Breast epithelium (tissue), 4 donors: ENCODE measurements at regions of chr4 and their contacts with region 1.

Region 1: GRCh38 chr4:67204441-67204840 is 340.9 kb downstream of the CENPC start:
- DNase-seq: no peak
- H3K4me3 ChIP-seq: no peak overlapping the region
- H3K27ac ChIP-seq: no peak overlapping the region
- H3K4me1 ChIP-seq: no peaks in the 10 kb centered on the region
- H3K27me3 ChIP-seq: no peaks in the 10 kb centered on the region
- CTCF ChIP-seq: no peak
- POLR2A ChIP-seq: no peak

Region 2: DNA sequence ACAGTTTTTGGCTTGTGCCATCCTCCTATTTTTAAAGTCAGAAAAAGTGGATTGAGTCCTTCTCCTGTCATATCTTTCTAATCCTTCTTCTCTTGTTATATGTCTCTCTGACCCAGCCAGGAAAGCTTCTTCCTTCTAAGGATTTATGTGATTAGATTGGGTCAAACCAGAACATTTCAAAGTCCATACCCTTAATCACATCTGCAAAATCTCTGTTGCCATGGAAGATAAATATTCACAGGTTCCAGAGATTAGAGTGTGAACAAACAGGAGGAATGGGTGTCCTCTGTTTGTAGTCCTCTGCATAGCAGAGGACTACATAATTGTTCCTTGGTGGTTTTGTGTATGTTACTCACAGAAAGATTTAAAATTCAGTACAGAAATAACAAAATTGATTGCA is 1955.3 kb before region 1 on chr4:
- intact Hi-C with region 1: loop called (anchors 5 kb)
- DNase-seq: no peak
- H3K4me3 ChIP-seq: no peak overlapping the region
- H3K27ac ChIP-seq: no peak overlapping the region
- H3K4me1 ChIP-seq: no peaks in the 10 kb centered on the region
- H3K27me3 ChIP-seq: no peaks in the 10 kb centered on the region
- CTCF ChIP-seq: no peak
- POLR2A ChIP-seq: no peak

Region 3: GRCh38 chr4:65546882-65547416 is 1657.5 kb before region 1 on chr4:
- intact Hi-C with region 1: no loop called
- DNase-seq: no peak
- H3K4me3 ChIP-seq: no peak overlapping the region
- H3K27ac ChIP-seq: no peak overlapping the region
- H3K4me1 ChIP-seq: no peaks in the 10 kb centered on the region
- H3K27me3 ChIP-seq: no peaks in the 10 kb centered on the region
- CTCF ChIP-seq: no peak
- POLR2A ChIP-seq: no peak

Region 4: DNA sequence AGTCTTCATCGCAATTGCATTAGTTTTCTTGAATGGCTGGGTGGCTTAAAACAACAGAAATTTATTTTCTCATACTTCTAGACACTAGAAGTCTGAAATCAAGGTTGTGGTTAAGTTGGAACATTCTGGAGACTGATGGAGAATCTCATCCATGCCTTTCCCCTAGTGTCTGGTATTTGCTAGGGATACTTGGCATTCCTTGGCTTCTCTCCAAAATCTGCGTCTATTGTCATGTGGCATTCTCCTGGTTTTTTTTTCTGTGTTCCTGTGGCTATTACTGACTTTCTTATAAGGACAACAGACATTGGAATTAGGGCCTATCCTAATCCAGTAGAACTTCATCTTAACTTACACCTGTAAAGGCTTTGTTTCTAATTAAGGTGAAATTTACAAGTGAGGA is 1261.4 kb before region 1 on chr4:
- intact Hi-C with region 1: no loop called
- DNase-seq: no peak
- H3K4me3 ChIP-seq: no peak overlapping the region
- H3K27ac ChIP-seq: no peak overlapping the region
- H3K4me1 ChIP-seq: no peaks in the 10 kb centered on the region
- H3K27me3 ChIP-seq: no peaks in the 10 kb centered on the region
- CTCF ChIP-seq: no peak
- POLR2A ChIP-seq: no peak

Region 5: DNA sequence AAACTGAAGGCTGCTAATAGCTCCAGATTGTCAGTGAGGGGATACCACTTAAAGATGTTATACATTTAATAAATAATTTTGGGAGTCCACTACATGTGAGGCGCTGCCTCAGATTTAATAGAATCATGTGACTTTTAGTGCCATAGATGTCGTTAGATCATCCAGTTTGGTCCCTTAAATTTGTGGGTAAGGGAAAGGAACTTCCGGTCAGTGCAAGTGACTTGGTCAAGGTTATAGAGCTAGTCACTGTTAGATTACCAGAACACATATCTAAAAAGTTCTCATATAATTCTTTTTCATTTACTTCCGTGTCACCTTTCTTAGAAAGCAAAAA is 497.0 kb after region 1 on chr4:
- intact Hi-C with region 1: no loop called
- DNase-seq: no peak
- H3K4me3 ChIP-seq: peak overlapping the region; percentile 80 to 96 (median 94)
- H3K27ac ChIP-seq: peak overlapping the region; percentile 98
- H3K4me1 ChIP-seq: peaks cover 0 to 6% of the 10 kb centered on the region in 2 donors
- H3K27me3 ChIP-seq: no peaks in the 10 kb centered on the region
- CTCF ChIP-seq: no peak
- POLR2A ChIP-seq: no peak